ENCODE measurements at regions of chr16 and their contacts with region 1.

Region 1: GRCh38 chr16:47905771-47906170 is 250.0 kb downstream of the ABCC12 start:
- DNase-seq: no peak
- H3K4me3 ChIP-seq: no peak overlapping the region
- CTCF ChIP-seq: no peak
- POLR2A ChIP-seq: no peak

Region 2: GRCh38 chr16:47956916-47957315 is 51.1 kb after region 1 on chr16:
- intact Hi-C with region 1: no loop called
- DNase-seq: no peak
- H3K4me3 ChIP-seq: no peak overlapping the region
- CTCF ChIP-seq: no peak
- POLR2A ChIP-seq: no peak

Region 3: GRCh38 chr16:49129935-49130334 is 1224.2 kb after region 1 on chr16:
- intact Hi-C with region 1: loop called (anchors 5 kb)
- DNase-seq: no peak
- H3K4me3 ChIP-seq: no peak overlapping the region
- CTCF ChIP-seq: no peak
- POLR2A ChIP-seq: no peak